ENCODE measurements at regions of chr1 and their contacts with region 1.

Region 1: DNA sequence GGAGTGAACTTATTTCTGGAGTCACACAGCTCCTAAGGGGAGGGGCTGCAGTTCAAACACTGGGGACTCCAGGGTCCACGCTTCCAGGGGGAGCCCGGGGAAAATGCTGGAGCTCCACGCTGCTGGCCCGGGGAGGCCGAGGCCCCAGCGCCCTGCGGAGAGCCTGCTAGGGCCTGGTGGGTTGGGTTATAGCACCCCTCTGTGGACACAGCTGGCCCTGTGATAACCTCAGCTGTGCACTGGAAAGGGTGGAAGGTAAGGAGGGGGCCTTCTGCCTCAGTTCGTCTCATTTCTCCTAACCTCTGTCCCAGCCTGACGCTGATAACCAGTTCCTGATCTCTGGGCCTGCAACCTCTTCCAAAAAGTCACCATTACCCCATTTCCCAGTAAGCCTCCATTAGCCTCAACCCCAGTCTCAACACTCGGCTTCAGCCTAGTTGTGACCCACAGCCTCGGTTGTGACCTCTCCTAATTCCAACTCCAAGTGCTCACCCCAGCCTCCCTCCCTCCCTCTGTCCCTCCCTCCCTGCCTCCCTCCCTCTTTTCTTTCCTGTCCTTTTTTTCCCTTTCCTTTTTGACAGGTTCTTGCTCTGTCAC is 7.1 kb downstream of the NBL1 start:
- DNase-seq: peak; percentile 57
- ATAC-seq: peak; percentile 48
- H3K4me3 ChIP-seq: no peak overlapping the region
- H3K4me3 Mint-ChIP-seq: no peak overlapping the region
- H3K27ac ChIP-seq: no peak overlapping the region
- H3K27ac Mint-ChIP-seq: no peak overlapping the region
- H3K4me1 ChIP-seq: peaks cover 0 to 6% of the 10 kb centered on the region in 2 donors
- H3K4me1 Mint-ChIP-seq: peaks cover 2% of the 10 kb centered on the region
- H3K27me3 ChIP-seq: peaks cover 0 to 16% (median 1%) of the 10 kb centered on the region in 4 experiments
- H3K27me3 Mint-ChIP-seq: peaks cover 28% of the 10 kb centered on the region
- CTCF ChIP-seq: peak; percentile 54

Region 2: GRCh38 chr1:18556364-18556763 is 1094.9 kb before region 1 on chr1:
- CTCF ChIA-PET with region 1: no interaction called
- POLR2A ChIA-PET with region 1: no interaction called
- intact Hi-C with region 1: no loop called
- DNase-seq: no peak
- ATAC-seq: no peak
- H3K4me3 ChIP-seq: no peak overlapping the region
- H3K4me3 Mint-ChIP-seq: no peak overlapping the region
- H3K27ac ChIP-seq: no peak overlapping the region
- H3K27ac Mint-ChIP-seq: no peak overlapping the region
- H3K4me1 ChIP-seq: no peaks in the 10 kb centered on the region
- H3K4me1 Mint-ChIP-seq: peaks cover 7% of the 10 kb centered on the region
- H3K27me3 ChIP-seq: peaks cover 0 to 17% (median 3%) of the 10 kb centered on the region in 4 experiments
- H3K27me3 Mint-ChIP-seq: peaks cover 58% of the 10 kb centered on the region
- CTCF ChIP-seq: no peak

Region 3: DNA sequence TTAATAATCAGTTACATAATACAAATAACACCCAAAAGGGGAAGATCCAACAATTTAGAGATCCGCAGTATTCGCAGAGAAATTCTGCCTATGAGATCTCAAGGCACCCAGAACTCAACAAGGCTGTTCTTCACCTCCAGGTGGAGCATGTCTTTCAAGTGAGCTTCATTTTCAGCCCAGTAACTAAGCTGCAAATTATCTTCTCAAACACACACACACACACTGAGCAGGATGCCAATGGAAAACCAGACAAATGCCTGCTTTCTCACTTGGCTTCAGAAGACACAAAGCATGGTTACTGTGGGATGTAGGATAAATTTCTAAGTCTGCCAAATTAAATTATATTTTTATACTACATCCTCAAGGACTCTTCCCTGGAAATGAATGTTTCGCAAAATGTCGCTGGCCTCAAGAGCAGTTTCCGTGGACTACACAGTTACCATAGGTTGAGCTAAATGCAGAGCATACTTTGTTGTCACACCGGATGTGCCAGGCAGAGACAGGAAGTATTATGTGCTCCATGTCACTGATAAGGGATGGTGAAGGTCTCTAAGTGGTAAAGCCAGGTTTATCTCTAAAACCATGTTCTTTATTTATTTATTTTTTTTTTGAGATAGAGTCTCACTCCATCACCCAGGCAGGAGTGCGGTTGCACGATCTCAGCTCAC is 471.5 kb before region 1 on chr1:
- CTCF ChIA-PET with region 1: interaction called, 3 read pairs
- POLR2A ChIA-PET with region 1: no interaction called
- intact Hi-C with region 1: loop called (anchors 2 kb)
- DNase-seq: peak; percentile 29
- ATAC-seq: no peak
- H3K4me3 ChIP-seq: no peak overlapping the region
- H3K4me3 Mint-ChIP-seq: no peak overlapping the region
- H3K27ac ChIP-seq: peak overlapping the region in 1 of 2 donors; percentile 9
- H3K27ac Mint-ChIP-seq: no peak overlapping the region
- H3K4me1 ChIP-seq: no peaks in the 10 kb centered on the region
- H3K4me1 Mint-ChIP-seq: no peaks in the 10 kb centered on the region
- H3K27me3 ChIP-seq: no peaks in the 10 kb centered on the region
- H3K27me3 Mint-ChIP-seq: no peaks in the 10 kb centered on the region
- CTCF ChIP-seq: peak; percentile 29

Region 4: GRCh38 chr1:19439464-19440171 is 211.6 kb before region 1 on chr1:
- CTCF ChIA-PET with region 1: interaction called, 4 read pairs
- POLR2A ChIA-PET with region 1: no interaction called
- intact Hi-C with region 1: loop called (anchors 2 kb)
- DNase-seq: peak; percentile 51
- ATAC-seq: peak; percentile 21
- H3K4me3 ChIP-seq: no peak overlapping the region
- H3K4me3 Mint-ChIP-seq: no peak overlapping the region
- H3K27ac ChIP-seq: no peak overlapping the region
- H3K27ac Mint-ChIP-seq: peak overlapping the region; percentile 59
- H3K4me1 ChIP-seq: peaks cover 17 to 40% of the 10 kb centered on the region in 2 donors
- H3K4me1 Mint-ChIP-seq: peaks cover 73% of the 10 kb centered on the region
- H3K27me3 ChIP-seq: no peaks in the 10 kb centered on the region
- H3K27me3 Mint-ChIP-seq: no peaks in the 10 kb centered on the region
- CTCF ChIP-seq: peak; percentile 52

Region 5: DNA sequence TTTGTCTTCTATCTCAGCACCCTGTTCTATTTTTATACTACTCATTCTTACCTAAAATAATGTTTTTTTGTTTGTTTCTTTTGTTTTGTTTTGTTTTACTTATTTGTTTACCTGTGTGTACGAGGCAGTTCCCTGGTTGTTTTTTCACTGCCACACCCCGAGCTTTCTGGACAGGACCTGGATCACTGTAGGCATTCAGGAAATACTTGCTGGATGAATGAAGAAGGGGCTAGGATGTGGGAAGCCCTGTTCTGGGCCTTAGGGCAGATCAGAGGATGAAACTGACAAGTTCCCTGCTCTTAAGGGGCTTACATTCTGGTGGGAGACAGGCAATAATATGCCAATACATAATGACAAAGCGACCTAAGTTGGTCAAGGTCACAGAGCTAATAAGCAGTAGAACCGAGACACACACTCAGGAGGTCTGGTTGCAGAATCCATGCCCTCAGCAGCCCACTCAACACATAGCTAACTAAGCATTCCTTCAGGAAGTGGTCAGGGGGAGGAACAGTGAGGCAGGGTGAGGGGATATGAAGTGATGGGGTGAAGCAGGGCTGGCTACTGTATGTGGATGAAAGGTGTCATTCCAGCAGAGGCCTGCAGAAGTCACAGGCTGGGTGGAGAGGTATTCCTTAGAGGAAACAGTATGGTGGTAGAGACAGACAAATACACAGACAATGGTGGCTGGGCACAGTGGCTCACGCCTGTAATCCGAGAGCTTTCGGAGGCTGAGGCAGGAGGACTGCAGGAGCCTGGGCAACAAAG is 134.2 kb after region 1 on chr1:
- CTCF ChIA-PET with region 1: no interaction called
- POLR2A ChIA-PET with region 1: no interaction called
- intact Hi-C with region 1: no loop called
- DNase-seq: no peak
- ATAC-seq: no peak
- H3K4me3 ChIP-seq: no peak overlapping the region
- H3K4me3 Mint-ChIP-seq: no peak overlapping the region
- H3K27ac ChIP-seq: no peak overlapping the region
- H3K27ac Mint-ChIP-seq: no peak overlapping the region
- H3K4me1 ChIP-seq: no peaks in the 10 kb centered on the region
- H3K4me1 Mint-ChIP-seq: peaks cover 5% of the 10 kb centered on the region
- H3K27me3 ChIP-seq: no peaks in the 10 kb centered on the region
- H3K27me3 Mint-ChIP-seq: no peaks in the 10 kb centered on the region
- CTCF ChIP-seq: no peak

Measured in B cell (primary cell).